B cell (primary cell): ENCODE measurements at regions of chrX and their contacts with region 1.

Region 1: GRCh38 chrX:7083468-7084396 is 63.8 kb upstream of the STS start:
- DNase-seq: peak; percentile 82
- ATAC-seq: peak; percentile 85
- H3K4me3 ChIP-seq: peak overlapping the region in 2 of 5 experiments; percentile 28 to 30
- H3K4me3 Mint-ChIP-seq: peak overlapping the region; percentile 70
- H3K27ac ChIP-seq: peak overlapping the region; percentile 67 to 73
- H3K27ac Mint-ChIP-seq: peak overlapping the region; percentile 88
- H3K4me1 ChIP-seq: peaks cover 53 to 61% of the 10 kb centered on the region in 2 donors
- H3K4me1 Mint-ChIP-seq: peaks cover 69% of the 10 kb centered on the region
- H3K27me3 ChIP-seq: no peaks in the 10 kb centered on the region
- H3K27me3 Mint-ChIP-seq: no peaks in the 10 kb centered on the region
- CTCF ChIP-seq: no peak

Region 2: GRCh38 chrX:6738518-6739470 is 344.9 kb before region 1 on chrX:
- CTCF ChIA-PET with region 1: no interaction called
- POLR2A ChIA-PET with region 1: no interaction called
- intact Hi-C with region 1: loop called (anchors 2 kb)
- DNase-seq: peak; percentile 80
- ATAC-seq: peak; percentile 93
- H3K4me3 ChIP-seq: peak overlapping the region in 1 of 5 experiments; percentile 3
- H3K4me3 Mint-ChIP-seq: peak overlapping the region; percentile 44
- H3K27ac ChIP-seq: peak overlapping the region; percentile 52 to 60
- H3K27ac Mint-ChIP-seq: peak overlapping the region; percentile 79
- H3K4me1 ChIP-seq: peaks cover 22 to 28% of the 10 kb centered on the region in 2 donors
- H3K4me1 Mint-ChIP-seq: peaks cover 30% of the 10 kb centered on the region
- H3K27me3 ChIP-seq: no peaks in the 10 kb centered on the region
- H3K27me3 Mint-ChIP-seq: no peaks in the 10 kb centered on the region
- CTCF ChIP-seq: no peak

Region 3: GRCh38 chrX:6941041-6941440 is 142.7 kb before region 1 on chrX:
- CTCF ChIA-PET with region 1: no interaction called
- POLR2A ChIA-PET with region 1: no interaction called
- intact Hi-C with region 1: no loop called
- DNase-seq: no peak
- ATAC-seq: no peak
- H3K4me3 ChIP-seq: no peak overlapping the region
- H3K4me3 Mint-ChIP-seq: no peak overlapping the region
- H3K27ac ChIP-seq: no peak overlapping the region
- H3K27ac Mint-ChIP-seq: no peak overlapping the region
- H3K4me1 ChIP-seq: no peaks in the 10 kb centered on the region
- H3K4me1 Mint-ChIP-seq: no peaks in the 10 kb centered on the region
- H3K27me3 ChIP-seq: no peaks in the 10 kb centered on the region
- H3K27me3 Mint-ChIP-seq: no peaks in the 10 kb centered on the region
- CTCF ChIP-seq: no peak

Region 4: DNA sequence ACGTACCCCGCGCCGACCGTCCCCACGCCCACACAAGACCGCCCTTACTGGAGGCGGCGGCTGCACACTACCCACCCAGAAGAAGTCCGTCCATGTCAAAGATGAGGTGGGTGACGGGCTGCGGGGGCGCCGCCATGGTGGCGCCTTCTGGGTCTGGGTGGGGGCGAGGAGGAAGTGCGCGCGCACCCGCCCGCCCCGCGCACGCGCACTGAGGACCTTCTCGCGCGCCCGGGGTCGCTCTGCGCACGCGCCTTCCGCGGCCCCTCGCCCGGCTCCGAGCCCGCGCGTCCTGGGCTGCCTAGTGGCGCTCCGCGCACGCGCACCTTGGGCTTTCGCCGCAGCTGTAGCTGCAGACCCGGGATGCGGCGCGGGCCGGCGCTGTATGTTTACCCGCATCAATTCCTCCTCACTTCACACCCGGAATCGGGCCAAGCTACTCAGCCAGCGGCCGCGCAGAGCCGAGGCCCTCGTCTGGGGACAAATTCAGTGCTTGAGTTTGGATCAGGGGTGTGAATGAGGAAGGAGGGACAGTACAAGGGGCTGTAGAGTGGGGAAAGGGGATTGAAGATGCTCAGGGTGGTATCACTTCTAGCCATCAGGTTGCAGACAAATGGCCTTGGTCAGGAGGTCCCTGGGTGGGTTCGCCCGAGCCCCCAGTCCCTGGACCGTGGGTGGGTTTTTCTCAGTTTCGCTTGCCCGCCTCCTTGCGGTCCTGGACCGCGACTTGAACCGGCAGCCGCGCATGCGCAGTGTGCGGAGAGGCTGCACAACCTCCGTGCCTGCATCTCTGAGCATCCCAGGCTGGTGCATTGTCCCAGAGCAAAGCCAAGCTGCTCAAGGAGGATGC is 64.5 kb after region 1 on chrX and contains the start of gene PUDP:
- CTCF ChIA-PET with region 1: no interaction called
- POLR2A ChIA-PET with region 1: no interaction called
- intact Hi-C with region 1: loop called (anchors 1 kb)
- DNase-seq: peak; percentile 92
- ATAC-seq: peak; percentile 82
- H3K4me3 ChIP-seq: peak within 1 kb of the TSS; percentile 59 to 100 (median 95)
- H3K4me3 Mint-ChIP-seq: peak within 1 kb of the TSS; percentile 92
- H3K27ac ChIP-seq: peak within 1 kb of the TSS; percentile 76 to 88
- H3K27ac Mint-ChIP-seq: peak within 1 kb of the TSS; percentile 93
- H3K4me1 ChIP-seq: peaks cover 10 to 13% of the 10 kb centered on the region in 2 donors
- H3K4me1 Mint-ChIP-seq: peaks cover 14% of the 10 kb centered on the region
- H3K27me3 ChIP-seq: no peaks in the 10 kb centered on the region
- H3K27me3 Mint-ChIP-seq: no peaks in the 10 kb centered on the region
- CTCF ChIP-seq: no peak
- total RNA-seq, gene PUDP: 13.1 and 14.1 TPM in 2 replicates